CD8-positive, alpha-beta memory T cell (primary cell): ENCODE measurements at regions of chr7 and their contacts with region 1.

Region 1: GRCh38 chr7:26398756-26399501 is 107.3 kb downstream of the SNX10 start:
- DNase-seq: peak in 1 of 5 donors; percentile 11
- H3K4me3 ChIP-seq: peak overlapping the region; percentile 35
- H3K4me3 Mint-ChIP-seq: peak overlapping the region; percentile 82 to 93 (median 87)
- H3K27ac ChIP-seq: no peak overlapping the region
- H3K27ac Mint-ChIP-seq: peak overlapping the region in 2 of 8 donors; percentile 45 to 49
- H3K4me1 ChIP-seq: no peaks in the 10 kb centered on the region
- H3K4me1 Mint-ChIP-seq: peaks cover 10 to 17% (median 11%) of the 10 kb centered on the region in 3 donors
- H3K27me3 ChIP-seq: peaks cover 15% of the 10 kb centered on the region
- H3K27me3 Mint-ChIP-seq: peaks cover 16 to 73% of the 10 kb centered on the region in 2 donors

Region 2: DNA sequence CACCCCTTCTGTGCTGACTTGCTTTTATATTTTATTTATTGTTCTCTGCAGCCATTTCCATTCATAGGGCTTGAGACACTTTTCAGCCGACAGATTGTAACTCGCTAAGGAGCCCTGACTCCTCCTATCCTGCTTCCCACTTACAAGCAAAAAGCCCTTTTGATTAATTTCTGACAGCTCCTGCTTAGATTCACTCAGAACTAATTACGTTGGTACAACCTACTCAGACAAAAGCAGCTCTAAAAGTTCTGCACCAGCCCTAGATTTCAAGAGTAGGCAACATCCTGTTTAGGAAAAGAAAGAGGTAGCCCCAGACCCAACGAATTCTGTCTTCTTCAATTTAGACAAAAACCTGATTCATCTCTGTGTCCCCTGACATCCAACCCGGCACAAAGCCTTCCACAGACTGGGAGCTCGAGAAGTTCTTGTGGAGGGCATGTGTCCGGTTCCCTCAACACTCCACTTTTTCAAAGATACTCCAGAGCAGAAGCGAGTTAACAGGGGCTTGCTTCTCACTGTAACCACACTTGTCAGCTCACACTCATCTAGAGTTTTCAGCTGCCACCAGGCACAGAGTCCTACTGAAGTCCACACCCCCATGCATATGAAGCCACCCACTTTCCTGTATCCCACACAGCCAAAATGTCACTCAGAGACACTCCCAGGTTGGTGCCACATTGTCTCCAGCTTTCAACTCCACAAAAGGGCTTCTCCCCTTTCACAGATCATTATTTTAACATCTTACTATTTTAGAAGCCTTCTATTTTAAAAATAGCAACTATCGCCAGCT is 360.5 kb before region 1 on chr7:
- CTCF ChIA-PET with region 1: no interaction called
- POLR2A ChIA-PET with region 1: interaction called, 10 read pairs
- DNase-seq: no peak
- H3K4me3 ChIP-seq: no peak overlapping the region
- H3K4me3 Mint-ChIP-seq: no peak overlapping the region
- H3K27ac ChIP-seq: no peak overlapping the region
- H3K27ac Mint-ChIP-seq: no peak overlapping the region
- H3K4me1 ChIP-seq: no peaks in the 10 kb centered on the region
- H3K4me1 Mint-ChIP-seq: peaks cover 0 to 5% (median 4%) of the 10 kb centered on the region in 3 donors
- H3K27me3 ChIP-seq: peaks cover 3% of the 10 kb centered on the region
- H3K27me3 Mint-ChIP-seq: peaks cover 19 to 45% of the 10 kb centered on the region in 2 donors